Heart left ventricle (tissue), 16 donors: ENCODE measurements at regions of chr2 and their contacts with region 1.

Region 1: DNA sequence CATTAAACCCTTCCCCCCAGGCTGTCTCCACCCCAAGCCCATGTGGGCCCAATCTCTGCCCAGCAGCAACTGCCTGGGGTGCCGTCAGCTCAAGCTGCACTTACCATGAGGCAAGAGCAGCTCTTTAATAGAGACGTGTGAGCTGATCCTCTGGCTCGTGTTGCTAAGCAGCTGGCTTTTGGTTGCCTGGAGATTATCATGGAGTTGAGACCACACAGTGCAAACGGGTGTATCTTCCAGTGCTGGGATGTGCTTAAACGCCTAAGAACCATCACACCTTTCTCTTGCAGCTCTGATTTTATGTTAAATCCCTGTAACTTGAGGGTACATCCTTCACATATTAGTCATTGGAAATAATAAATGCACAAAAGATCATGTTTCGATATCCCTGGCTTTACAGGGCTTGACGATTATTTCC is 271.1 kb downstream of the PRKCE start:
- DNase-seq: peak; percentile 70 to 90 (median 80)
- ATAC-seq: peak; percentile 94 to 97 (median 96)
- H3K4me3 ChIP-seq: no peak overlapping the region
- H3K27ac ChIP-seq: peak overlapping the region in 9 of 12 donors; percentile 30 to 82 (median 61)
- H3K4me1 ChIP-seq: peaks cover 0 to 75% (median 35%) of the 10 kb centered on the region in 12 donors
- H3K27me3 ChIP-seq: no peaks in the 10 kb centered on the region
- CTCF ChIP-seq: no peak
- POLR2A ChIP-seq: no peak

Region 2: DNA sequence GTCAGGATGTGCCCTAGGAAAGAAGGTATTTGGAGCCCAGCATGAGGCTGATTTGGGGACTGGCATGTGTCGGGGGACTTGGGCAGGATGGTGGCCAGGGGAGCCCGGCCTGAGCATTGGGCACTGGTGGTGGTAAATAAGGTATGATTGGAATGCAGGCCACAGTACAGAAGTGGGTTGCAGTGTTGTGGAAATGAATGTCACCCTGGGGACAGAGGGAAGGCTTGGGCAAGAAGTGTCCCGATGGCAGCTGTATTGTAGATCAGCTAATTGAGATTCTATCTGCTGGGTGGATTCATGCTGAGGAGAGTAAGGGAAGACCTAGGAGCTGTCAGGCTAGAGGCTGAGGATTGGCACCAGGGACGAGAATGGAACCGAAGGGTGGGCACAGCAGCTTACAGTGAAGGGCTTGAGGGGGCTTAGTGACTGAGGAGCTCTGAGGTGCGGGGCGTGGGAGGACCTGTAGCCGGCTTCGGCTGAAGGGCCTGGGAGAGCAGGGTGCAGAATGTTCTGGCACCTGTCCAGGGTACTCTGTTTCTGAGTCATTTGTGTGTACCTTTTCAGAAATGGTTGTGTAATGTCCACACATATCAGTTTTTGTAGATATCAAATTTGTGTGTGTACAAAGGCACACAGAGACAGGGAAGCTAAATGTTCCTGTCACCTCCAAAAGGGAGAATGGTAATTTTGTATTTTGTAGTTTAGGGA is 100.9 kb before region 1 on chr2:
- intact Hi-C with region 1: loop called in 4 of 10 experiments (anchors 5 to 10 kb)
- DNase-seq: peak in 4 of 5 donors; percentile 32 to 80 (median 44)
- ATAC-seq: peak; percentile 8 to 58 (median 46)
- H3K4me3 ChIP-seq: no peak overlapping the region
- H3K27ac ChIP-seq: peak overlapping the region in 10 of 12 donors; percentile 8 to 79 (median 56)
- H3K4me1 ChIP-seq: peaks cover 3 to 70% (median 32%) of the 10 kb centered on the region in 12 donors
- H3K27me3 ChIP-seq: no peaks in the 10 kb centered on the region
- CTCF ChIP-seq: no peak
- POLR2A ChIP-seq: no peak

Region 3: GRCh38 chr2:45851613-45852304 is 70.8 kb before region 1 on chr2:
- intact Hi-C with region 1: no loop called
- DNase-seq: peak in 1 of 5 donors; percentile 49
- ATAC-seq: peak in 3 of 4 donors; percentile 20 to 66 (median 65)
- H3K4me3 ChIP-seq: no peak overlapping the region
- H3K27ac ChIP-seq: no peak overlapping the region
- H3K4me1 ChIP-seq: peaks cover 0 to 40% (median 12%) of the 10 kb centered on the region in 12 donors
- H3K27me3 ChIP-seq: no peaks in the 10 kb centered on the region
- CTCF ChIP-seq: no peak
- POLR2A ChIP-seq: no peak

Region 4: GRCh38 chr2:45889053-45889452 is 33.5 kb before region 1 on chr2:
- intact Hi-C with region 1: loop called in 3 of 10 experiments (anchors 5 kb)
- DNase-seq: peak in 3 of 5 donors; percentile 29 to 72 (median 66)
- ATAC-seq: peak; percentile 28 to 78 (median 72)
- H3K4me3 ChIP-seq: no peak overlapping the region
- H3K27ac ChIP-seq: peak overlapping the region in 3 of 12 donors; percentile 4 to 82 (median 19)
- H3K4me1 ChIP-seq: peaks cover 4 to 93% (median 55%) of the 10 kb centered on the region in 12 donors
- H3K27me3 ChIP-seq: no peaks in the 10 kb centered on the region
- CTCF ChIP-seq: peak in 3 of 12 donors; percentile 16 to 19 (median 17)
- POLR2A ChIP-seq: no peak

Region 5: DNA sequence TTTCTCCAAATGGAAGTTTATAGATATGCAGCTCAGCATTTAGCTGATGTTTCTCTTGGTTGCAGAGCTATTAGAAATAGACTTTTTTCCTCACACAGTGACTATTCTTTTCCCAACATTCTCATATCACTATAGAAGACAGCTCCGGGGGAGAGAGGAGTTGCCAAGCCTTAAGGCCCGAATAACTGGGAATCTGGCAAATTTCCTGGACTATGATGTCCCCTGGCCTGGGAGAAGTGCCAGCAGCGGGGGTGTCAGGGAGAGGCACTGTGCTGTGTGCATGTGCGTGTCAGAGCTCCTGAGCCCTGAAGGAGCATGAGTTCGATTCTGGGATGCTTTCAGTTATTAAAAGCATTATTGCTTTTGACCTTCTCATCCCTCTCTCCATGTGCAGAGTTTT is 39.9 kb after region 1 on chr2:
- intact Hi-C with region 1: no loop called
- DNase-seq: peak; percentile 67 to 81 (median 74)
- ATAC-seq: peak; percentile 72 to 81 (median 73)
- H3K4me3 ChIP-seq: no peak overlapping the region
- H3K27ac ChIP-seq: peak overlapping the region in 9 of 12 donors; percentile 3 to 53 (median 26)
- H3K4me1 ChIP-seq: peaks cover 2 to 56% (median 40%) of the 10 kb centered on the region in 12 donors
- H3K27me3 ChIP-seq: no peaks in the 10 kb centered on the region
- CTCF ChIP-seq: no peak
- POLR2A ChIP-seq: no peak

Region 6: DNA sequence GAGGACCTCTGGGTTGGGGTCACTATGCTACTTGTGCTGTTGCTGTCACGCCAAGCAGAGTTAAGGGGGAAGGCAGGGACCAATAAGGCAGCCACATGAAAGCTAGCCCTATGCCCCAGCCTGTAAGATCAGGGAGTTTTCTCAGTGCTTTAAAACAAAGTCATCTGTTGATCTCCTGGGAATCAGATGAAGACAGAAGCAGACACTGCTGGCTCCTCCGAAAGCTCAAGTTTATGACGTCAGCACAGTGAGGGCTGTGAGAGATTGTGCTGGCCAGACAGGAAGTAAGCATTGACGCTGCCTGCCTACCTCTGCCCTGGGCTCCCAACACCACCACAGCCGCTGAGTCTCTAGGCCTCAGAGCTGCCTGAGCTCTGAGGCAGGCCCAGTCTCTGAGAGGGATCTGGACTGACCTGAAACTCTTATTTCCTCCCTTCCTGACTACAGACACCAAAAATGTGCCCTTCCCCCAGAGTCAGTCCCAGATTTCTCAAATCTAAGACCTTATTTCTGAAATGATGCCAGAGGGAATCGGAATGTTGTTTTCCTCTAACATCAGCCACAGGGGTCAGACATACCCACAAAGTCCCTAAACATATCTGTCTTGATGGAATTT is 256.6 kb after region 1 on chr2:
- intact Hi-C with region 1: no loop called
- DNase-seq: peak; percentile 78 to 83 (median 82)
- ATAC-seq: peak; percentile 87 to 93 (median 90)
- H3K4me3 ChIP-seq: no peak overlapping the region
- H3K27ac ChIP-seq: peak overlapping the region; percentile 33 to 83 (median 76)
- H3K4me1 ChIP-seq: peaks cover 0 to 24% (median 13%) of the 10 kb centered on the region in 12 donors
- H3K27me3 ChIP-seq: no peaks in the 10 kb centered on the region
- CTCF ChIP-seq: no peak
- POLR2A ChIP-seq: no peak